OCI-LY7 (cell line): ENCODE measurements at regions of chr2 and their contacts with region 1.

Region 1: GRCh38 chr2:25301453-25302352 is 40.0 kb downstream of the DNMT3A start:
- DNase-seq: peak; percentile 45
- H3K4me3 ChIP-seq: no peak overlapping the region
- H3K27ac ChIP-seq: no peak overlapping the region
- H3K4me1 ChIP-seq: peaks cover 11% of the 10 kb centered on the region
- CTCF ChIP-seq: no peak

Region 2: GRCh38 chr2:25207078-25207545 is 94.6 kb before region 1 on chr2:
- CTCF ChIA-PET with region 1: no interaction called
- POLR2A ChIA-PET with region 1: no interaction called
- intact Hi-C with region 1: loop called (anchors 1 kb)
- DNase-seq: no peak
- H3K4me3 ChIP-seq: no peak overlapping the region
- H3K27ac ChIP-seq: no peak overlapping the region
- H3K4me1 ChIP-seq: peaks cover 19% of the 10 kb centered on the region
- CTCF ChIP-seq: no peak